ENCODE measurements at regions of chr11 and their contacts with region 1.

Region 1: DNA sequence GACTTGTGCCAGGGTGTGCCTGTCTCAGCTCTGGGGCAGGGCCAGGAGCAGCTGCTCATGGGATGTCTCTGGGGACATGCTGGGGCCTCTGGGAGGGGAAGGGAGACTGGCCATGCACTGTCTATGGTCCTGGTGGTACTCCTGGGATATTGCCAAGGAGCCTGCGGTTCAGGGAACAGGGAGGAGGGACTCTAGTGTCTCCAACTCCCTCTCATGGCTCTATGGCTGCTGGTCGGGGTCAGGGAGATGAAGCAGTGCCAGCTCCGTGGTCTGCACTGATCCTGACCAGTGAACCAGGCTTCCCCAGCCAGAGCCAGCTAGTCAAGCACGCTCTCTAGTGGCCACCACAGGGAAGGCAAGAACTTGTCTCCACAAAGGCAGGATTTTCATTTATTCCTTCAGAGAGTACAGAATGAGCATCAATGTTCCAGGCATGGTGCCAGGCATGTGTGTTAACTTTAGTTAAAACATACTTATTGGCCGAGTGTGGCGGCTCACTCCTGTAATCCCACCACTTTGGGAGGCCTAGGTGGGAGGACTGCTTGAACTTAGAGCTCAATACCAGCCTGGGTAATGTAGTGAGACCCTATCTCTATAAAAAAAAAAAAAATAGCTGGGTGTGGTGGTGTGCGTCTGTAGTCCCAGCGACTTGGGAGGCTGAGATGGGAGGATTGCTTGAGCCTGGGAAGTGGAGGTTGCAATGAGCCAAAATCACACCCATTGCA is 2.5 kb upstream of the BEST1 start:
- DNase-seq: peak; percentile 91 to 96 (median 93)
- ATAC-seq: peak; percentile 77 to 82
- H3K4me3 ChIP-seq: no peak overlapping the region
- H3K27ac ChIP-seq: peak overlapping the region; percentile 55
- H3K4me1 ChIP-seq: peaks cover 5% of the 10 kb centered on the region
- H3K27me3 ChIP-seq: no peaks in the 10 kb centered on the region

Region 2: DNA sequence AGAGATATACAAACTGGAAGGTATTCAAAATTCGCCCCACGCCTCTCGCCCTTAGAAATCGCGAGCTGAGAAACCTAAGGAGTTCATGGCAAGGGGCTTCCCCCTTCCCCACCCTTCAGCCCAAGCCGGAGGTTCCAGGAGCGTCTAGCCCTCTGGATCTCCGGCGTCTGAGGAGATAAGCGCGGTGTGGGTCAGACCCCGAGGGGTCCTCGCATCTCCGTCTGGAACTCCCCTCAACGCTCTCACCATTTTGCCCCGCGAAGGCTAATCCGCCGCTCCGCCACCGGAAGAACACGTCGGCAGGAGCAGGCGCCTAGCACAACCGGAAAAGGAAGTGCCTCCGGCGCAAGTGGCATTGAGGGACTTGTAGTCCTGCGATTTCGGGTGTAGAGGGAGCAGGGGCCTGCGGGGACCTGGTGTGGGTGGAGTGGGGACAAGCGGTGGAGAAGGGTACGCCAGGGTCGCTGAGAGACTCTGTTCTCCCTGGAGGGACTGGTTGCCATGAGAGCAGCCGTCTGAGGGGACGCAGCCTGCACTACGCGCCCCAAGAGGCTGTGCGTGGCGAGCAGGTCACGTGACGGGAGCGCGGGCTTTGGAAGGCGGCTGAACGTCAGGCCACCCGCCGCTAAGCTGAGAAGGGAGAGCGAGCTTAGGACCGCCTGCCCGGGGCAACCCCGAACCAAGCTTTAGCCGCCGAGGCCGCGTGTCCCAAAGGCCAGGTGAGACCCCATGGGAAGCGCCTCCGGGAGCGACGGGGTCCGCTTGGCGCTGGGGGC is 155.2 kb before region 1 on chr11 and contains the starts of genes FEN1 and TMEM258:
- intact Hi-C with region 1: loop called in 2 of 4 experiments (anchors 5 kb)
- DNase-seq: peak; percentile 91 to 95 (median 94)
- ATAC-seq: peak; percentile 93
- H3K4me3 ChIP-seq: peak within 1 kb of the TSS; percentile 93
- H3K27ac ChIP-seq: peak within 1 kb of the TSS; percentile 97
- H3K4me1 ChIP-seq: no peaks in the 10 kb centered on the region
- H3K27me3 ChIP-seq: no peaks in the 10 kb centered on the region
- total RNA-seq, gene FEN1: 4.6 to 5.4 (median 5.1) TPM
- total RNA-seq, gene TMEM258: 107 to 113 (median 111) TPM

Region 3: DNA sequence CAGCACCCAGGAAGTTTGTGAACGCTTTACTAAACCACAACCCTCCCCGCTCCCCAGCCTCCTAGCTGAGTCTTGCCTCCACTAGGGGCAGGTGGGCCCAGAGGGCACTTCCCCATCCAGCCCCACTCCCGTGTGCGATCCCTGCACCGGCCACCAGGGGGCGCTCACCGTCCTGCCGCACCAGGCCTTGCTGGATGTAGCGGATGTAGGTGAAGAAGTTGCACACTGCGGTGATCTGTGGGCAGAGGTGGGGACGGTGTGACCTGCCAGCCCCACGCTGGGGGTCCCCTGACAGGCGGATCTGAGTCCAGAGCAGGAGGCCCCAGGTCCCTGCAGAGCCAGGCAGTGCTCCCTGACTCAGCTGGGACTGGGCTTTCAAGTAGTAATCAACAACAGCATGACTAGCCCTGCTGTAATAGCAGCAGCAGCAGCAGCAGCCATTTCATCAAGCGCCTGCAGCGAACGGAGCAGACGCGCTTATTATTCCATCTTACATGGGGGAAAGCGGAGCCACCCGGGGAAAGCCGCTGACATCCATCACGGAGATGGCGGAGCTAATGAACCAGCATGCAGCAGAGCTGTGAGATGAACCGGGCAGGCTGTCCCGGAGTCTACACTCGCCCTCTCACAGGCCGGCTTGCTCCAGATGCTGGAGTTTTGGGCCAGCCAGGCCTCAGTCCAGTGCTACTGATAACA is 48.4 kb before region 1 on chr11:
- intact Hi-C with region 1: loop called (anchors 1 to 5 kb)
- DNase-seq: peak; percentile 78 to 95 (median 93)
- ATAC-seq: peak; percentile 71 to 83
- H3K4me3 ChIP-seq: no peak overlapping the region
- H3K27ac ChIP-seq: no peak overlapping the region
- H3K4me1 ChIP-seq: no peaks in the 10 kb centered on the region
- H3K27me3 ChIP-seq: no peaks in the 10 kb centered on the region

Region 4: DNA sequence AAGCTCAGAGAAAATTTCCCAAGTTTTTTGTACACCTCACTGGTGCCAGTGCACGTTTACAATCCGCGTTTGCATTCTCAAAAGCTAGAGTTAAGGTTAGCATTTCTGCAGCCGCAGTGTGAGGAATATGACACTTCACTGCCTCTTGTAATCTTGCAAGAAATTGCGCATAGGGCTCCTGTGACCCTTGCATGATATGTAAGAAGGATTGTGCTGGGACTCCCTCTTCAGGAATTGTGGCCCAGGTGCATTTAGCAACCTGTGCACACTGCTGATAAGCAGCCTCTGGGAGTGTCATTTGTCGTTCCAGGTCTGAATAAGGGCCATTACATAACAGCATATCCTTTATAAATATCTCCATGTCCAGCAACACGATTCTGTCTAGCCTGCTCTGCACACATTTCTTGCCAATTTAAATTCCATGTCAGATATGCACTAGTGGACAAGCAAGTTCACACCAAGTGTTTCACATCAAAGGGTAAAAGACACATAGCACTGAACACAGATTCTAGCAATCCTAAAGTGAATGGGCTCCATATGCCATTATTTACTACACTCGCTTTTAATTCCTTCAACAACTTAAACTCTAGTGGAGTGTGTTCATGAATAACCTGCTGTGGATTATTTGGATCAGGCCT is 107.0 kb after region 1 on chr11:
- intact Hi-C with region 1: loop called in 1 of 4 experiments (anchors 10 kb)
- DNase-seq: no peak
- ATAC-seq: no peak
- H3K4me3 ChIP-seq: no peak overlapping the region
- H3K27ac ChIP-seq: no peak overlapping the region
- H3K4me1 ChIP-seq: no peaks in the 10 kb centered on the region
- H3K27me3 ChIP-seq: no peaks in the 10 kb centered on the region

Region 5: GRCh38 chr11:62069986-62070919 is 122.6 kb after region 1 on chr11:
- intact Hi-C with region 1: loop called in 1 of 4 experiments (anchors 10 kb)
- DNase-seq: no peak
- ATAC-seq: no peak
- H3K4me3 ChIP-seq: no peak overlapping the region
- H3K27ac ChIP-seq: no peak overlapping the region
- H3K4me1 ChIP-seq: no peaks in the 10 kb centered on the region
- H3K27me3 ChIP-seq: no peaks in the 10 kb centered on the region

Region 6: GRCh38 chr11:62088331-62088933 is 140.8 kb after region 1 on chr11:
- intact Hi-C with region 1: loop called in 1 of 4 experiments (anchors 5 kb)
- DNase-seq: no peak
- ATAC-seq: no peak
- H3K4me3 ChIP-seq: no peak overlapping the region
- H3K27ac ChIP-seq: no peak overlapping the region
- H3K4me1 ChIP-seq: no peaks in the 10 kb centered on the region
- H3K27me3 ChIP-seq: no peaks in the 10 kb centered on the region

Measured in right cardiac atrium (tissue), 5 donors.